ENCODE measurements at regions of chr4 and their contacts with region 1.

Region 1: DNA sequence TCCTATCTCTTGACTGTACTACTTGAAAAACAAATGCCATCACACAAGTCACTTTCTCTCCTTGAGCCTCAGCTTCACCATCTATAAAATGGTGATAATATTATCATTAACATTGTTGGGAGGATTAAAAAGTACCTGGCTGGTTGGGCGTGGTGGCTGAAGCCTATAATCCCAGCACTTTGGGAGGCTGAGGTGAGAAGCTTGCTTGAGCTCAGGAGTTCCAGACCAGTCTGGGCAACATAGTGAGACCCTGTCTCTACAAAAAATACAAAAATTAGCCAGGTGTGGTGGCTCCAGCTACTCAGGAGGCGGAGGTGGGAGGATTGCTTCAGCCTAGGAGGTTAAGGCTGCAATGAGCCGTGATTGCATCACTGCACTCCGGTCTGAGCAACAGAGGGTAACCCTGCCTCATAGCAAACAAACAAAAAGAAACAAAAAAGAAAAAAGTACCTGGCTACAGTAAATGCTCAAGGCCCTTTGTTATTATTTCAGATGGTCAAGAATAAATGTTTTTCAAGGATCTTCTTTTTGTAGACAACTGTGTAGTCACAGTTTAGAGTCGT is 120.3 kb downstream of the CHRNA9 start:
- H3K4me3 Mint-ChIP-seq: no peak overlapping the region
- H3K27ac Mint-ChIP-seq: no peak overlapping the region
- H3K4me1 Mint-ChIP-seq: peaks cover 8% of the 10 kb centered on the region
- H3K27me3 Mint-ChIP-seq: no peaks in the 10 kb centered on the region

Region 2: DNA sequence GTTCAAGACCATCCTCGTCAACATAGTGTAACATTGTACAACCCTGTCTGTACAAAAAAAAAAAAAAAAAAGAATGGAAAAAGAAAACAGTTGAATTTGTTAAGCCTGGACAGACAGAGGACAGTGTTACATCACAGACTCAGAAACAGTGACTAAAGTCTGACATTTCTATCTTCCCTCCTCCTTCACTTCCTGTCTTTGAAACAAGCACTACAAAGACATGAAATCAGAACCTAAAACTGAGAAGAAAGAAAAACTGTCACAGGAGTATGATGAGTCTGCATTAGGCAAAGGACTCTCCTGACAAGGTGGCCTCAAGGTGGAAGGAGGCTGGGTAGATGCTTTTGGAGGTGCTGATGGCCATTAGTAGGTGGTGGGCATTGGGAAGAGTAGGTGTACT is 47.5 kb after region 1 on chr4:
- intact Hi-C with region 1: loop called (anchors 10 kb)
- H3K4me3 Mint-ChIP-seq: no peak overlapping the region
- H3K27ac Mint-ChIP-seq: peak overlapping the region; percentile 57
- H3K4me1 Mint-ChIP-seq: peaks cover 34% of the 10 kb centered on the region
- H3K27me3 Mint-ChIP-seq: no peaks in the 10 kb centered on the region

Region 3: GRCh38 chr4:40621592-40622512 is 166.4 kb after region 1 on chr4:
- intact Hi-C with region 1: no loop called
- H3K4me3 Mint-ChIP-seq: peak overlapping the region; percentile 57
- H3K27ac Mint-ChIP-seq: peak overlapping the region; percentile 85
- H3K4me1 Mint-ChIP-seq: peaks cover 82% of the 10 kb centered on the region
- H3K27me3 Mint-ChIP-seq: no peaks in the 10 kb centered on the region

Region 4: GRCh38 chr4:41887821-41888686 is 1432.6 kb after region 1 on chr4:
- intact Hi-C with region 1: no loop called
- H3K4me3 Mint-ChIP-seq: no peak overlapping the region
- H3K27ac Mint-ChIP-seq: no peak overlapping the region
- H3K4me1 Mint-ChIP-seq: no peaks in the 10 kb centered on the region
- H3K27me3 Mint-ChIP-seq: peaks cover 51% of the 10 kb centered on the region

Measured in dendritic cell treated with granulocyte-macrophage colony-stimulating factor and Interleukin-4, amounts not matched to agents 40 ng/mL and 50 ng/mL, for 4 days (primary cell).